GM12878 (cell line): ENCODE measurements at regions of chr5 and their contacts with region 1.

Region 1: GRCh38 chr5:14781106-14781505 is 90.5 kb downstream of the ANKH start:
- DNase-seq: no peak
- ATAC-seq: peak; percentile 46; the same call in 2 of the 3 replicates
- H3K4me3 ChIP-seq: no peak overlapping the region
- H3K27ac ChIP-seq: no peak overlapping the region
- H3K4me1 ChIP-seq: peaks cover 11% of the 10 kb centered on the region
- H3K27me3 ChIP-seq: no peaks in the 10 kb centered on the region
- CTCF ChIP-seq: no peak
- EP300 ChIP-seq: no peak
- POLR2A ChIP-seq: no peak
- RAD21 ChIP-seq: no peak

Region 2: GRCh38 chr5:14739538-14739937 is 41.6 kb before region 1 on chr5:
- CTCF ChIA-PET with region 1: no interaction called
- POLR2A ChIA-PET with region 1: no interaction called
- RAD21 ChIA-PET with region 1: no interaction called
- SMC1A ChIA-PET with region 1: no interaction called
- in situ Hi-C with region 1: no loop called
- intact Hi-C with region 1: no loop called
- DNase-seq: no peak
- ATAC-seq: no peak
- H3K4me3 ChIP-seq: no peak overlapping the region
- H3K27ac ChIP-seq: no peak overlapping the region
- H3K4me1 ChIP-seq: peaks cover 5% of the 10 kb centered on the region
- H3K27me3 ChIP-seq: no peaks in the 10 kb centered on the region
- CTCF ChIP-seq: no peak
- EP300 ChIP-seq: no peak
- POLR2A ChIP-seq: no peak
- RAD21 ChIP-seq: no peak

Region 3: DNA sequence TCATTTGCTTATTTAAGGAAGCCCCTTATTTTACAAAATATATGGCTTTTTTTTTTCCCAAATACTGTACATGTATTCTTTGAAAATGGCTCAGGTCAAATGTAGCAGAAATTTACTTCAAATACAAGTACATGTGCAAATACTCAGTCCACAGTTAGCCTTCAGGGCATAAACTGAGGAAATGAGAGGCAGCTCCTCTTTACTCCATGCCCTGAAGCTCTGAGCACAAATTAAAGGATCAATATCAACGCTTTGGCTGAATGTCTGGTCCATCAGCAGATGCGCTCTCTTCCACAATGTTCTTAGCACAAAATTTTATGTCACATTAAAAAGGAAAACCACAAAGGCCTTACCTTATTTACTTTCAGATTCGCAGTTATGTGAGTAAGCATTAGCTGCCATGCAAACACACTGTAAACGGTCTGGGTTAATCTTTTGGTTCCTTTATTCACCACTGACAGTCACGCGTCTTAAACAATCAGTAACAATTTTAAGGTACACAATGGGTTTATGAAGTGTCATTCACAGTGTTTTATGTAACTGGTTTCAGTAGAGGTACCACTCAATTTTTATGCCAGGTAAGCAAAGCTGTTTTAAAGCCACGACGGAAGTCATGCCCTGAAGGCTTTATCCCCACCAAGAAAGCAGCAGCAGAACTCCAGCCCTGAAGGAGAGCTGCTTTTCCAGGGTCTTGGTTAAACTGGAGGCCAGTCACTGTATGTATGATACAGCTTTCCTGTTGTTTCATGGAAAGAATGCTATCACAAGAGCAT is 13.2 kb before region 1 on chr5:
- CTCF ChIA-PET with region 1: interaction called, 4 read pairs
- POLR2A ChIA-PET with region 1: interaction called, 4 read pairs
- RAD21 ChIA-PET with region 1: no interaction called
- SMC1A ChIA-PET with region 1: interaction called, 15 read pairs
- in situ Hi-C with region 1: no loop called
- intact Hi-C with region 1: no loop called
- DNase-seq: no peak
- ATAC-seq: no peak
- H3K4me3 ChIP-seq: no peak overlapping the region
- H3K27ac ChIP-seq: no peak overlapping the region
- H3K4me1 ChIP-seq: peaks cover 3% of the 10 kb centered on the region
- H3K27me3 ChIP-seq: no peaks in the 10 kb centered on the region
- CTCF ChIP-seq: no peak
- EP300 ChIP-seq: no peak
- POLR2A ChIP-seq: no peak
- RAD21 ChIP-seq: no peak

Region 4: DNA sequence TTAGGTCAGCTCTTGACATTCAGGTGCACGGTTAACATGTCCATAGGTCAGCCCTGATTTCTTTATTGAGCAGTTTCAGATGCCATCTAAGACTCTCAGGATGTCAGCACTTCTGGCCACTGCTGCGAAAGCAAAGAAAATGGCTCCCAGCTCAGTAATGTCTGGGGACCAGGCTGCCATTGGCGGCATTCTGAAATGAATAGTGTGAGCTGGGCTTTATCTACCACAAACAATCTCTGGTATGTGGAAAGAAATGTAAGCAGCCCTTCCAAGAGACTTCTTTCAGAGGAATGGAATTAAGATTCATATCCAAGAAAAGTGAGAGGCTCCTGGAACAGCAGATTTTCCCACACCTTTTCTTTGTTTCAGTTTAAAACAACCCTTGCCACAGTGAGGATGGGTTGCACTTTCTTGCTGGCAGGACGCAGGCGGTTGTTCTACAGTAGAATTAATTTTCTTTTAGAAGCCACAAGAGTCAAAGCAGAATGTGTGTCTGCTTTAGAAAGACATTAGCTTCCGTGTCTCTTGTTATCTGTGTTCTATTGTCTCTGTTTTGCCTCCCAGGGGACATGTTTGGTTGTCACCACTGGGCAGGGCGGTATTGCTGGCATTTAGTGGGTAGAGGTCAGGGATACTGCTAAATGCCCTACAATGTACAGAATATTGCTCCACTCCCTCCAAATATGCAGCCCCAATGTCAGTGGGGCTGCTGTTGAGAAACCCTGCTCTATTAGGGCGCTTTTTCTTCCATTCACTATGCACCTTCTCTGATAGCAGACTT is 240.3 kb after region 1 on chr5:
- CTCF ChIA-PET with region 1: no interaction called
- POLR2A ChIA-PET with region 1: no interaction called
- RAD21 ChIA-PET with region 1: no interaction called
- SMC1A ChIA-PET with region 1: no interaction called
- in situ Hi-C with region 1: no loop called
- intact Hi-C with region 1: no loop called
- DNase-seq: no peak
- ATAC-seq: no peak
- H3K4me3 ChIP-seq: no peak overlapping the region
- H3K27ac ChIP-seq: no peak overlapping the region
- H3K4me1 ChIP-seq: no peaks in the 10 kb centered on the region
- H3K27me3 ChIP-seq: no peaks in the 10 kb centered on the region
- CTCF ChIP-seq: no peak
- EP300 ChIP-seq: no peak
- POLR2A ChIP-seq: no peak
- RAD21 ChIP-seq: no peak